ENCODE measurements at regions of chr2 and their contacts with region 1.

Region 1: GRCh38 chr2:86440631-86441391 is at the start of gene KDM3A:
- DNase-seq: peak; percentile 100
- H3K4me3 ChIP-seq: peak within 1 kb of the TSS; percentile 79 to 90 (median 84)
- H3K27ac ChIP-seq: peak within 1 kb of the TSS; percentile 95 to 99 (median 96)
- H3K4me1 ChIP-seq: peaks cover 29 to 31% (median 30%) of the 10 kb centered on the region in 4 donors
- H3K27me3 ChIP-seq: no peaks in the 10 kb centered on the region
- CTCF ChIP-seq: no peak
- EP300 ChIP-seq: no peak
- POLR2A ChIP-seq: peak; percentile 69
- total RNA-seq, gene KDM3A: 37.3 to 68.6 (median 52.0) TPM

Region 2: GRCh38 chr2:86195055-86195807 is 245.6 kb before region 1 on chr2 and contains the start of gene IMMT:
- intact Hi-C with region 1: loop called (anchors 5 kb)
- DNase-seq: peak; percentile 99
- H3K4me3 ChIP-seq: peak within 1 kb of the TSS; percentile 64 to 100 (median 97)
- H3K27ac ChIP-seq: peak within 1 kb of the TSS; percentile 94 to 100 (median 100)
- H3K4me1 ChIP-seq: peaks cover 46 to 66% (median 63%) of the 10 kb centered on the region in 4 donors
- H3K27me3 ChIP-seq: no peaks in the 10 kb centered on the region
- CTCF ChIP-seq: no peak
- EP300 ChIP-seq: no peak
- POLR2A ChIP-seq: peak; percentile 88
- total RNA-seq, gene IMMT: 53.5 to 68.1 (median 66.6) TPM

Region 3: GRCh38 chr2:86492048-86492453 is 51.2 kb after region 1 on chr2:
- intact Hi-C with region 1: loop called (anchors 10 kb)
- DNase-seq: no peak
- H3K4me3 ChIP-seq: no peak overlapping the region
- H3K27ac ChIP-seq: peak overlapping the region; percentile 52 to 62 (median 58)
- H3K4me1 ChIP-seq: peaks cover 0 to 41% (median 39%) of the 10 kb centered on the region in 4 donors
- H3K27me3 ChIP-seq: no peaks in the 10 kb centered on the region
- CTCF ChIP-seq: no peak
- EP300 ChIP-seq: no peak
- POLR2A ChIP-seq: no peak

Measured in esophagus muscularis mucosa (tissue), 4 donors.